ENCODE measurements at regions of chr2 and their contacts with region 1.

Region 1: GRCh38 chr2:27303093-27304025 is 4.9 kb downstream of the UCN start:
- DNase-seq: peak; percentile 90
- H3K4me3 ChIP-seq: peak overlapping the region; percentile 61
- H3K27ac ChIP-seq: peak overlapping the region; percentile 43
- H3K4me1 ChIP-seq: peaks cover 14% of the 10 kb centered on the region
- CTCF ChIP-seq: peak; percentile 92

Region 2: GRCh38 chr2:27118525-27119329 is 184.6 kb before region 1 on chr2 and contains the start of gene CGREF1:
- CTCF ChIA-PET with region 1: no interaction called
- POLR2A ChIA-PET with region 1: interaction called, 5 read pairs
- intact Hi-C with region 1: loop called (anchors 5 kb)
- DNase-seq: no peak
- H3K4me3 ChIP-seq: no peak within 1 kb of the TSS
- H3K27ac ChIP-seq: no peak within 1 kb of the TSS
- H3K4me1 ChIP-seq: no peaks in the 10 kb centered on the region
- CTCF ChIP-seq: no peak
- total RNA-seq, gene CGREF1: not detected in 2 replicates

Measured in OCI-LY7 (cell line).